ENCODE measurements at regions of chr1 and their contacts with region 1.

Region 1: GRCh38 chr1:40404670-40405462 is 31.3 kb downstream of the SMAP2 start:
- DNase-seq: no peak
- ATAC-seq: no peak
- H3K4me3 Mint-ChIP-seq: no peak overlapping the region
- H3K27ac Mint-ChIP-seq: no peak overlapping the region
- H3K4me1 Mint-ChIP-seq: peaks cover 12% of the 10 kb centered on the region
- H3K27me3 Mint-ChIP-seq: no peaks in the 10 kb centered on the region
- CTCF ChIP-seq: peak; percentile 72

Region 2: DNA sequence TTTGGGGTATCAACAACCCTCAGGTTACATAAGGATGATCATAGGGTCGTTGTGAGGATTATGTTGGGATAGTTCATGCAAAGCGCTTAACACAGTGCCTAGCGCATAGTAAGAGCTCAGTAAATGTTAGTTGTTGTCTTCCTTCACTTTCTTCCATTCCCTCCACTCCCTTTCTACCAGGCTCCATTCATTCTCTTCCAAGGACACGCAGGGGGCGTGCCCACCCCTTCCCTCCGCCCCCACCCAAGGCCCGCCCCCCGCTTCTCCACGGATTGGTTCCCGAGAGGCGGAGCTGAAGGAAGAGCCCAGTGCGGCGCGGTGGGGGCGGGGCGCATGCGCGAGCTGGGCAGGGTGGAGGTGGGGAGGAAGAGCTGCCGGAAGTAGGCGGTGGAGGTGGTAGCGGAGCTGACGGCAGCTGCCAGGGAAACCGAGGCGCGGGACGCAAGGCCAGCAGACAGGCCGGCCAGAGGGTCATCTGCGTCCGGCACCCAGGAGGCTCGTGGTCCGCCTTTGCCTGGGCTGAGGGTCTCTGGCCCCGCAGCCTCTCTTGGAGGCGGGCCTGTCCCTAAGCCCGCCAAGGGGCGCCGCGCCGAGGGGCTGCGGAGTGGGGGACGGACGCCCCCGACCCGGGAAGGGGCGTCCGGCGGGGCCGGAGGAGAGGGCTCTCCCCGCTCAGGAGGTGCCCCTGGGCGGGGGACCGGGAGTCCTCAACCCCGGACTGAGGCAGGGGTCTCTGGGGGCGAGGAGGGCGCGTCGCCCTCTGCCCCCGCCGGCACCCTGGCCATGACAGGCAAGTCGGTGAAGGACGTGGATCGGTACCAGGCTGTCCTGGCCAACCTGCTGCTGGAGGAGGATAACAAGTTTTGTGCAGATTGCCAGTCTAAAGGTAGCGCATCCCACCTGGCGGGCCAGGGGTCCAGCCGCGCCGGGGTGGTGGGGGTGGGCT is 31.3 kb before region 1 on chr1 and contains the start of gene SMAP2:
- CTCF ChIA-PET with region 1: interaction called, 22 read pairs
- POLR2A ChIA-PET with region 1: no interaction called
- DNase-seq: peak; percentile 97
- ATAC-seq: peak; percentile 98
- H3K4me3 Mint-ChIP-seq: peak within 1 kb of the TSS; percentile 89
- H3K27ac Mint-ChIP-seq: peak within 1 kb of the TSS; percentile 23; the same call in 1 of the 2 replicates
- H3K4me1 Mint-ChIP-seq: peaks cover 15% of the 10 kb centered on the region
- H3K27me3 Mint-ChIP-seq: peaks cover 13% of the 10 kb centered on the region
- CTCF ChIP-seq: no peak
- total RNA-seq, gene SMAP2: 4.9 to 5.7 TPM (median 5.7 TPM) in 3 replicates

Region 3: GRCh38 chr1:40385437-40386358 is 19.2 kb before region 1 on chr1:
- CTCF ChIA-PET with region 1: interaction called, 17 read pairs
- POLR2A ChIA-PET with region 1: no interaction called
- DNase-seq: no peak
- ATAC-seq: no peak
- H3K4me3 Mint-ChIP-seq: no peak overlapping the region
- H3K27ac Mint-ChIP-seq: 0 out of 2 replicates have a peak overlapping the region, but pooled peaks have one; percentile 29
- H3K4me1 Mint-ChIP-seq: peaks cover 8% of the 10 kb centered on the region; the same call in 1 of the 2 replicates
- H3K27me3 Mint-ChIP-seq: no peaks in the 10 kb centered on the region
- CTCF ChIP-seq: no peak

Region 4: DNA sequence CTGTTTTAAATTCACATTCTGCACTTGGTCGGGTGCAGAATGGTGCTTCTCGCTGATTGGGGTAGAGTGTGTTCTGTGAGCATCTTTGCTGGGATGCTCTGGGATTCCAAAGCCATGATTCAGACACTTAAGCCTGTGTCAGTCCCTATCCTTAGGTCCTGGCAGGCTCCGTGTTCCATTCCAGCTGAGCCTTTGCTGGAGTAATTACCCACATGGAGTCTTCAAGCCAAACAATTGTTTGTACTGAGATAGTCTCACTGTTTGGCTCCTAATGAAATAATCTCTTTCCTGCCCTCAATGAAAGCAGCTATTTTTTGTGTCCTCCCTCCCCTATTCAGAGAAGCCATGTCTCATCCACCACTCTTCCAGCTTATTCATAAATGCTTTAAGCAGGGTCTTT is 12.6 kb before region 1 on chr1:
- CTCF ChIA-PET with region 1: interaction called, 13 read pairs
- POLR2A ChIA-PET with region 1: no interaction called
- DNase-seq: no peak
- ATAC-seq: no peak
- H3K4me3 Mint-ChIP-seq: no peak overlapping the region
- H3K27ac Mint-ChIP-seq: no peak overlapping the region
- H3K4me1 Mint-ChIP-seq: peaks cover 4% of the 10 kb centered on the region; the same call in 1 of the 2 replicates
- H3K27me3 Mint-ChIP-seq: no peaks in the 10 kb centered on the region
- CTCF ChIP-seq: no peak

Region 5: DNA sequence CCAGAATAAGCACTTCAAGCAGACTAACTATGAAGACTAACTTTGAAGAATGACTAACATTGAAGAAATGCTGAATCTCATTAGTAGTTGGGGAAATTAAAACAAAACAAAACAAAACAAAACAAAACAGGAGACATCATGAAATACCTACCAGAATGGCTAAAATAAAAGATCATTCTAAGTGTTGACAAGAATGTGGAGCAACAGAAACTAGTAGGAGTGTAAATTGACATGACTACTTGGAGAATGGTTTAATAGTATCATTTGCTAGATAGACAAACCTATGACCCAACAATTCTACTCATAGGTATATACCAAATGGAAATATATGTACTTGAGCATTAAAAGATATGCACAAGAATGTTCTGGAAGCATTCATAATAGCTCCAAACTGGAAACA is 26.5 kb after region 1 on chr1:
- CTCF ChIA-PET with region 1: no interaction called
- POLR2A ChIA-PET with region 1: no interaction called
- DNase-seq: no peak
- ATAC-seq: no peak
- H3K4me3 Mint-ChIP-seq: no peak overlapping the region
- H3K27ac Mint-ChIP-seq: no peak overlapping the region
- H3K4me1 Mint-ChIP-seq: no peaks in the 10 kb centered on the region
- H3K27me3 Mint-ChIP-seq: peaks cover 4% of the 10 kb centered on the region; the same call in 1 of the 2 replicates
- CTCF ChIP-seq: no peak

Region 6: DNA sequence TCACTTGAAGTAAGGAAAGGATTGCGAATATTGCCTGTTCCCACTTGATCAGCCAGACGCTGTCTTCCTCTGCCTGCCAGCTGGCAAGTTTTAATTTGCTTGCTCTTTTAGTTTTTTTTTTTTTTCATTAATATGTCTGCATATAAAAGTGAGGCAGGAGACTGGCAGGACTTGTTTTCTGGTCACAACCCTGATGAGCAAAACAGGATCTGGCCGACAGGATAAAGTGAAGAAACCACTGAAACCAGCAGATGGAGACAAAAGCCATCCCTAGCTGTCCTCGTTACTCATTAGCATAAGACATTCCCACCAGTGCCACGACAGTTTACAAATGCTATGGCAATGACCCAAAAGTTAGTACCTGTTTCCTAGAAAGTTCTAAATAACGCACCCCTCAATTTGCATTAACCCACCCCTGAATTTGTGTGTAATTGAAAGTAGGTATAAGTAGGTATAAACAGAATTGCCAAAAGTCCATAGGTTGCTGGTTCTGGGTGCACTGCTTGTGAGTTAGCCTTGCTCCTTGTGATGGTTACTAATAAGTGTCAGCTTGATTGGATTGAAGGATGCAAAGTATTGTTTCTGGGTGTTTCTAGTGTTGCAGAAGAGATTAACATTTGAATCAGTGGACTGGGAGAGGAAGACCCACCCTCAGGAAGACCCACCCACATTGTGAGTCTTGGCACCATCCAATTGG is 187.4 kb after region 1 on chr1:
- CTCF ChIA-PET with region 1: no interaction called
- POLR2A ChIA-PET with region 1: no interaction called
- DNase-seq: no peak
- ATAC-seq: no peak
- H3K4me3 Mint-ChIP-seq: no peak overlapping the region
- H3K27ac Mint-ChIP-seq: no peak overlapping the region
- H3K4me1 Mint-ChIP-seq: no peaks in the 10 kb centered on the region
- H3K27me3 Mint-ChIP-seq: peaks cover 3% of the 10 kb centered on the region; the same call in 1 of the 2 replicates
- CTCF ChIP-seq: no peak

Measured in WTC11 (cell line).